Motor neuron (in vitro differentiated cells): ENCODE measurements at regions of chr3 and their contacts with region 1.

Region 1: DNA sequence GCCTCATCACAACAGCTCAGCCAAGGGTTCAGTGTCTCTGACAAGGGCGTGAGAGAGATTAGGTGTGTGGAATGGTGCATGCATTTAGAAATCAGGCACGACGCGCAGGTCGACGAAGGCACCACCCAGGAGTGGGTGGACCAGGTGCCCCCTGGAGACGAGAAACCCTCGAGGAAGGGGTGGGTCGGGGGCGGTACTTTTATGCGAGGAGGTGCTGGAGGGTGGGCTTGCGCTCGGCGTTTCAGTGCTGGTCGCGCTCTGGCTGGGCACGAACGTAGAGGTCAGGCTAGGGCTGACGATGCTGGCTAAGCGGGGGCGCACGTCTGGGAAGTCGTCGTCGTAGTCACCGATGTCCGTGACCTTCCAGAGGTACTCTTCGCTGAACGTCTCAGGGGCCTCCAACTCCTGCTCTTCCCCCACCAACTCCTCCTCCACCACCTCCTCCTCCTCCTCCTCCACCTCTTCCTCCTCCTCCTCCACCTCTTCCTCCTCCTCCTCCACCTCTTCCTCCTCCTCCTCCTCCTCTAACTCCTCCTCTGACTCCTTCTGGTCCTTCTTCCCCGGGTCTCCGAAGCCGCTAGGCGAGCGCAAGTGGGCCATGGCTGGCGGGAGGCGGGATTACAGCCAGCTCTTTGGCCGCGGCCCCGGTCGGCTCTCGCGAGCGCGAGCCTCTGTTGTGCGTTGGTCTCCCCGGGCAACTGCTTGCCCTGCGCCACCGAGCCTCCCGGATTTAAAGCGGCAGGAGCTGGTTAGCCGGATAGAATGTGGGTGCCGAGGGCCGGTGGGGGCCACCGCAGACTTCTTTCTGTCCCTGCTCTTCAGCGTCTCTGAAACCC is at the start of gene ERICH6:
- ATAC-seq: peak; percentile 91 to 100 (median 100)
- H3K4me3 ChIP-seq: peak within 1 kb of the TSS; percentile 51 to 70 (median 53)
- H3K27ac ChIP-seq: peak within 1 kb of the TSS in 1 of 2 donors; percentile 71
- H3K4me1 ChIP-seq: peaks cover 0 to 4% of the 10 kb centered on the region in 2 donors
- total RNA-seq, gene ERICH6: 0.20 to 0.43 (median 0.23) TPM in 6 of 8 experiments, not detected in the others

Region 2: DNA sequence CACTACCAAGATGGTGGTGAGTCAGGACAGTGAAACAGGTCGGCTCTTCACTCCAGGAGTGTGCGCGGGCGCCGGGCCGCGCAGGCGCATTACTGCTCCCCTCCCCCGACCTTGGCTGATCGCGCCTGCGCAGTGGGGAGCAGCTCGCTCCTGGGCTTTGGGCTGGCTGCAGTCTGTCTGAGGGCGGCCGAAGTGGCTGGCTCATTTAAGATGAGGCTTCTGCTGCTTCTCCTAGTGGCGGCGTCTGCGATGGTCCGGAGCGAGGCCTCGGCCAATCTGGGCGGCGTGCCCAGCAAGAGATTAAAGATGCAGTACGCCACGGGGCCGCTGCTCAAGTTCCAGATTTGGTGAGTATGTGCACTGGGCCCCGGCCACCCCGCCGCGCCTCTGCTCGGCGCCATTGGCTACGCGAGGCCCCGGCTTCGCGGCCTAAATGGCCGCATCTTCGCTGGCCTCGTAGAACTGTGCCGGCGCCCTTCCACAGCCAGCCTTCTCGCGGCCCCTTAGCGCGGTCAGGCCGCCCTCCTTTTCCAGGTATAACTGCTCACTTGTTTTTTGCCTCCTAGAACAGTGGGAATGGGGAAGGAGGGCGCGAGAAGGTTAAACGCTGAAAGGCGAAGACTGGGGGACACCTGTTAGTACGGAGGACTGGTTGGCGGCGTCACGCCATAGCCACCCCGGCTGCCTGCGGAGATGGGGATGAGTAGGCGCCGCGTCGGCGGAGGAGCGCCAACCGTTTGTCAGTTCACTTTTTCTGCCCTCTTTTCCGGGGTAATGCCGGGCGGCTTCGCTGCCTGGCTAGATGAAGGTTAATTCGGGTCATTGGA is 100.2 kb before region 1 on chr3 and contains the start of gene SELENOT:
- in situ Hi-C with region 1: no loop called
- ATAC-seq: peak; percentile 88 to 96 (median 90)
- H3K4me3 ChIP-seq: peak within 1 kb of the TSS; percentile 51 to 80 (median 57)
- H3K27ac ChIP-seq: peak within 1 kb of the TSS; percentile 82
- H3K4me1 ChIP-seq: peaks cover 31 to 40% of the 10 kb centered on the region in 2 donors
- total RNA-seq, gene SELENOT: 36.5 to 113 (median 49.9) TPM

Region 3: GRCh38 chr3:150870396-150870795 is 166.9 kb after region 1 on chr3:
- in situ Hi-C with region 1: loop called in 2 of 9 experiments (anchors 25 kb)
- ATAC-seq: peak in 1 of 8 experiments; percentile 47
- H3K4me3 ChIP-seq: no peak overlapping the region
- H3K27ac ChIP-seq: no peak overlapping the region
- H3K4me1 ChIP-seq: no peaks in the 10 kb centered on the region

Region 4: DNA sequence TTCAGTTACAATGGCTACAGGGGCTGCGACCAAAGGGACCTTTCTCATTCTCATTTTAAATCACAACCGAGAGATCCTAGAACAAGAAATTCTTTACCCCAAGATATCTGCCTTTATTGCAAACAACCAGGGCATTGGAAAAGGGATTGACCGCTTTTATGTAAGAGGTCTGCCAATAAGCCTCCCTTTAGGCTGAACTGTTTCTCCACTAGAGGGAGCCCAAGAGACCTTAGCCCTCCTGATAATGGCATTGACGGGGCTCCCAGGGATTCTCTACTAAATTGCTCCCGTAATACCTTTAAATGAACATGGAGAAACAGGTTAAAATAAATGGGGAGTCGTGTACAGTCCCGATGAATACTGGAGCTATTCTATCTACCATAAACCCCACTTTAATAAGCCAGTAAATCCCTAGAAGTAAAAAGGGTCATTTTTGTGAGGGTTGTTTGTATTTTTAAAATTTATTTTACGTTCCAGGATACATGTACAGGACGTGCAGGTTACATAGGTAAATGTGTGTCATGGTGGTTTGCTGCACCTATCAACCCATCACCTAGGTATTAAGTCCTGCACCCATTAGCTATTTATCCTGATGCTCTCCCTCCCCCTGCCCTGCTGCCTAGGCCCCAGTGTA is 764.9 kb after region 1 on chr3:
- in situ Hi-C with region 1: no loop called
- ATAC-seq: peak in 3 of 8 experiments; percentile 64 to 78 (median 66)
- H3K4me3 ChIP-seq: no peak overlapping the region
- H3K27ac ChIP-seq: no peak overlapping the region
- H3K4me1 ChIP-seq: no peaks in the 10 kb centered on the region